OCI-LY7 (cell line): ENCODE measurements at regions of chr1 and their contacts with region 1.

Region 1: DNA sequence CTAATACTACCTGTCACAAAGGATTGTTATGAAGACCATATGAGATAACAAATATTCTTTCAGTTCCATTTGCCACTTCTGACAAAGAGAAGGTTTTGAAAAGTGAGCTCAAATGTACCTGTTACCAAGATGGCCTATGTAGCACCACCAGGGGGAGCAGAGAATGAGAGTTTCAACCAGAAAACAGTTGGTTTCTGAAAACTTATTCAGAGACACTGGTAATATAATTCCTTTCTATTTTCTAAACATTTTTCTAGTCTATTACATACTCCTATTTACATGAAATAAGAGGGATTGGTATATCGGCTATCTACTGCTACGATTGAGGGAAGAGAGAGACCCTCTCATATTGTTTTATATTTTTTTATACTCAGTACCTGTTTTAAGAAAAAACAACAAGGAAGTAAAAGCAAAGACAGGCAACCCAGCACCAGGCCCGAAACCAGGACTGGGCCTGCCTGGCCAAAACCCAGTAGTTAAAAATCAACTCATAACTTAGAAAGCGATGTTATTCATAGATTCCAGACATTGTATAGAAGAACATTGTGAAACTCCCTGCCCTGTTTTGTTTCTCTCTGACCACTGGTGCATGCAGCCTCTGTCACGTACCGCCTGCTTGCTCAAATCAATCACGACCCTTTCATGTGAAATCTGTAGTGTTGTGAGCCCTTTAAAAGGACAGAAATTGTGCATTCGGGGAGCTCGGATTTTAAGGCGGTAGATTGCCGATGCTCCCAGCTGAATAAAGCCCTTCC is 48.3 kb downstream of the IL23R start:
- DNase-seq: peak; percentile 54
- H3K4me3 ChIP-seq: no peak overlapping the region
- H3K27ac ChIP-seq: no peak overlapping the region
- H3K4me1 ChIP-seq: peaks cover 7% of the 10 kb centered on the region
- CTCF ChIP-seq: peak; percentile 85

Region 2: DNA sequence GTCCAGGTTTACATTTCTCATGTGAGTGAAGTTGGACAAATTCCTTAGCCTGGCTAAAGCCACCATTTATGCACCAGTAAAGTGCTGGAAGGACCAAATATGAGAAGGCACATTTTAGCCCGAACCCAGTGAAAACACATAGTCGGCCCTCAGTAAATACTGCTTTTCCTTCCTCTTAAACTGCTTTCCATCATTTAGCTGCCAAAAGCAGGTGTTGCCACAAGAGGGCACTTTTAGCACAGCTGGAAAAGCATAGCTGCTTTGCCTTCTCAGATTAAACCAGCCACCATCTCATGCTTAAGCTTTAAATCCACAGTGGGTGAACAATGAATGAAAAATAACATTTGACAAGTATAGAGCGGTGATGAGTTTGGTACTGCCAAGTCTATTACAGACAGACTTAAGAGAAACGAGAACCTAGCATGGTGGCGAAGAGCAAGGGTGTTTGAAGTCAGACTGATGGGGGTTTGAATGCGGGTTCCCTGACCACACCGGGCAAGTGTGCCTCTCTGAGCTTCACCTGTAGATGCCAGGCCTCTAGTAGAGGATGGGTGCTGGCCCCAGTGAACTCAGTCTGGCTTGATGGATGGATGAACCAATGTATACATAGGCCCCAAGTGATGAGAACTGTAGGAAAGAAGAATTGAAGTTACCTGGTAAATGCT is 218.4 kb before region 1 on chr1:
- CTCF ChIA-PET with region 1: no interaction called
- POLR2A ChIA-PET with region 1: interaction called, 6 read pairs
- intact Hi-C with region 1: loop called (anchors 2 kb)
- DNase-seq: peak; percentile 85
- H3K4me3 ChIP-seq: no peak overlapping the region
- H3K27ac ChIP-seq: no peak overlapping the region
- H3K4me1 ChIP-seq: peaks cover 26% of the 10 kb centered on the region
- CTCF ChIP-seq: peak; percentile 97

Region 3: GRCh38 chr1:67149179-67149770 is 65.3 kb before region 1 on chr1:
- CTCF ChIA-PET with region 1: no interaction called
- POLR2A ChIA-PET with region 1: no interaction called
- intact Hi-C with region 1: no loop called
- DNase-seq: peak; percentile 90
- H3K4me3 ChIP-seq: peak overlapping the region; percentile 0
- H3K27ac ChIP-seq: peak overlapping the region; percentile 15
- H3K4me1 ChIP-seq: peaks cover 7% of the 10 kb centered on the region
- CTCF ChIP-seq: peak; percentile 96